AG04449 (cell line): ENCODE measurements at regions of chr13 and their contacts with region 1.

Region 1: DNA sequence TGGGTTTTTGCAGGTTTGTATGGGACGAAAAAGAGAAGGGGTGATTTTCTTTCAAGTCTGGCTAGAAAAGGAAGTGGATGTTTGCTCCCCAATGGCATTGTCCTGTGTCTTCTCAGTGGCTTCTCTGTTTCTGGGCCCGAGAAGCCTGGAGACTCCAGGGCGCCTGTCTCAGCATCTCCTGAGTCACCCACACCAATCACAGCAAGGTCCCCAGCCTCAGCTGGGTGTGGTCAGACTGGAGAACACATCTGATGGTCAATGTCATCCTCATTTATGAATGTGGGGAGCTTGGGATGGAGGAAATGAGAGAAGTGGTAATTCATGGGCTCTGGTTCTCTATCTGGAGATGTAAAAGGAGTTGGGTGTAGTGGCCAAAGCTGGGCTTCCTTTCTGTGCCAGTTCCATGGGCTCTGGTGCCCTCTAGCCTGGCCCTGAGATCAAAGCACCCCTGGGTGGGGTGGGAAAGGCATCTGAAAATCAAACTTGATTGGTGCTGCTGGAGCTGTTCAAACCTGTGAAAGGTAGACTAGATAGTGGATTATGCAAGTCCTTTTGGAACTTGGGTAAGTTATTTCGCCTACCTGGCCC is 13.4 kb downstream of the RASL11A start:
- DNase-seq: no peak
- H3K4me3 ChIP-seq: no peak overlapping the region
- CTCF ChIP-seq: peak; percentile 48

Region 2: GRCh38 chr13:27270594-27271520 is 13.1 kb before region 1 on chr13 and contains the start of gene RASL11A:
- CTCF ChIA-PET with region 1: interaction called, 13 read pairs
- POLR2A ChIA-PET with region 1: no interaction called
- DNase-seq: no peak
- H3K4me3 ChIP-seq: peak within 1 kb of the TSS; percentile 86
- CTCF ChIP-seq: peak; percentile 90